ENCODE measurements at regions of chr10 and their contacts with region 1.

Region 1: GRCh38 chr10:109191341-109191740 is 732.0 kb downstream of the XPNPEP1 start:
- DNase-seq: peak; percentile 96
- H3K4me3 ChIP-seq: peak overlapping the region; percentile 23
- H3K27ac ChIP-seq: peak overlapping the region; percentile 99
- H3K4me1 ChIP-seq: peaks cover 34% of the 10 kb centered on the region
- H3K27me3 ChIP-seq: no peaks in the 10 kb centered on the region
- CTCF ChIP-seq: no peak

Region 2: GRCh38 chr10:108783897-108784296 is 407.4 kb before region 1 on chr10:
- CTCF ChIA-PET with region 1: no interaction called
- POLR2A ChIA-PET with region 1: no interaction called
- intact Hi-C with region 1: loop called (anchors 10 kb)
- DNase-seq: peak; percentile 82
- H3K4me3 ChIP-seq: no peak overlapping the region
- H3K27ac ChIP-seq: no peak overlapping the region
- H3K4me1 ChIP-seq: no peaks in the 10 kb centered on the region
- H3K27me3 ChIP-seq: no peaks in the 10 kb centered on the region
- CTCF ChIP-seq: peak; percentile 68

Region 3: GRCh38 chr10:109427411-109427810 is 236.1 kb after region 1 on chr10:
- CTCF ChIA-PET with region 1: no interaction called
- POLR2A ChIA-PET with region 1: no interaction called
- intact Hi-C with region 1: loop called (anchors 1 kb)
- DNase-seq: peak; percentile 84
- H3K4me3 ChIP-seq: no peak overlapping the region
- H3K27ac ChIP-seq: peak overlapping the region; percentile 75
- H3K4me1 ChIP-seq: peaks cover 82% of the 10 kb centered on the region
- H3K27me3 ChIP-seq: no peaks in the 10 kb centered on the region
- CTCF ChIP-seq: peak; percentile 68

Region 4: DNA sequence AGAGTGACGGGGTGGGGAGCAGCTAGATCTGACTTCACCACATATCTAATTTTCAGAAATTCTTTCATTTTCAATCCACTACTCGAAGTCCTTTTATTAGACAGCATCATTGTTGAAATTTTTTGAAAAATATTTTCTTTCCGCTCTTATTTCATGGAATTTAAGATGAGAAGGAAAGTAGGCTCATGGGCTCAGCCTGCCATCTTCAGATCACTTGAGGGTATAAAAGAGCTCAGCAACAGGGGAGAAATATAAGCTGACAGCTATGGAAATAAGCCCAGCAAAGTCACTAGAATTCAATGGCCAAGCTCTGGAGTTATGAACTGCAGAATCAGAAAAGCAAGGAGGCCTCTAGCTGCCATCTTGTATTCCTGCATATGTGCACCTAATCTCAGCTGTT is 342.9 kb after region 1 on chr10:
- CTCF ChIA-PET with region 1: no interaction called
- POLR2A ChIA-PET with region 1: no interaction called
- intact Hi-C with region 1: loop called (anchors 5 kb)
- DNase-seq: peak; percentile 26
- H3K4me3 ChIP-seq: no peak overlapping the region
- H3K27ac ChIP-seq: no peak overlapping the region
- H3K4me1 ChIP-seq: no peaks in the 10 kb centered on the region
- H3K27me3 ChIP-seq: no peaks in the 10 kb centered on the region
- CTCF ChIP-seq: peak; percentile 34; the same call in 1 of the 2 replicates

Region 5: DNA sequence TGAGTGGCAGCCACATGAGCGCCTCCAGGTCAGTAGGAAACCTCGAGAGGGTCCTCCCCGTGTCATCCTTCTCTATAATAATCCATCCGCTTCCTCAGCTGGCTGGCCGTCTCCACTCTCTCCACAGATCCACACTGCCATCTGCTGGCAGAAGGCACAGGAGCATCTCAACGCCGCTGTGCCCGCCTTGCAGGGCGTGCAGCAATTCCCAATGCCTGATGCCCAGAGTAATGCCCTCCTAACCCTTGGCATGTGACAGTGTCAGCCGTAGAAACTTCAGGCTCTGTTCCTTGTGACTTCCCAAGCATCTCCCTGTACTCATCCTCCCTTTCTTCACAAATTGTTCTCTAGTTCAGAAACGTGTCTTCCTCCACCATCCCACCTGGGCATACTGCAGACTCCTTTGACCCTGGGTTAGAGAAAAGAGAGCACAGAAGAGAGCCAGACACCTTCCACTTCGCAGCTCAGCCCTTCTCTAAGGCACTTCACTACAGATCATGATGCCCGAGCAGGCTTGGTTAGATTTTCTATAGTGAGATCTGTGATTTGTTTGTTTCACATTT is 661.2 kb after region 1 on chr10:
- CTCF ChIA-PET with region 1: no interaction called
- POLR2A ChIA-PET with region 1: no interaction called
- intact Hi-C with region 1: loop called (anchors 2 kb)
- DNase-seq: peak; percentile 89
- H3K4me3 ChIP-seq: no peak overlapping the region
- H3K27ac ChIP-seq: no peak overlapping the region
- H3K4me1 ChIP-seq: peaks cover 3% of the 10 kb centered on the region
- H3K27me3 ChIP-seq: no peaks in the 10 kb centered on the region
- CTCF ChIP-seq: peak; percentile 97

Measured in A673 (cell line).